ENCODE measurements at regions of chr16 and their contacts with region 1.

Region 1: DNA sequence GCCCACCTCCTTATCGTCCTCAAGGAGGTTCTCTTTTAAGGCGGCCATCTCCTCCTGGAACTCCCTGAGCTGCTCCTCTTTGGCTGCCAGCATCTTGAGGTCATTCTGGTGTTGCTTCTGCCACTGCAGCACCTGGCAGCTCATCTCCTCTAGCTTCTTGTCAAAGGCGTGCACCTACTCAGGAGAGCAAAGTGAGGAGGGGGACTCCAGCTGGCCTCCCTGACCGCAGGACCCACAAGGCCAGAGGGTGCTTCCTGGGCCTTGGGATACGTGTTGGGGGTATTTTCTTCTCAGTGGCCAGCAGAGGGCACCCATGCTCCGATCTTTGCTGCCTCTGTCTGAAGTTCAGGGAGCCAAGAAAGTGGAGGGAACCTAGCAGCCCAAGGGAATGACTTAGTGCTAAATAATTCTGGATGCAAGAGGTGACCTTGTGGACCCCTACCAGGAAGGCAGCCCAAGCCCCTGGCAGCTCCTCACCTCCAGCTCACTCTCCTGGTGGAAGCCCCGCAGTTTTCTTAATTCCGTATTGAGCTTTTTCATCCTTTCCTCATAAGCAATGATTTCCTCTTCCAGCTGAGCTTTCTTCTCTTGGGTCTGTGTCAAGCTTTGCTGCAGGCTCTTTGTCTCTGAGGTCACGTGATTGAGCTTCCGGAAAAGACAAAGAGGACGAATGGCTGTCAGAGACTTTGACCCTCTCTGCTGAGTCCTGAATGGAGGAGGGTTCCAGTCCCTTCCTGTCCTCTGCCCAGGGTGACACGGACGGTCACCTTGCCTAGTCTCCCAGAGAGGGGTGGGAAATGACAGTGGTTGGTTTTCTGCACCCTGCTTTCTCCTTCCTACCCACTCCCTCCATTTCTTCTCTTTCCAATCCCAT is 31.4 kb downstream of the DHX38 start:
- DNase-seq: peak; percentile 77
- ATAC-seq: peak; percentile 56
- H3K4me3 ChIP-seq: no peak overlapping the region
- H3K4me3 Mint-ChIP-seq: no peak overlapping the region
- H3K27ac ChIP-seq: no peak overlapping the region
- H3K27ac Mint-ChIP-seq: peak overlapping the region; percentile 41
- H3K4me1 ChIP-seq: peaks cover 0 to 6% of the 10 kb centered on the region in 2 donors
- H3K4me1 Mint-ChIP-seq: no peaks in the 10 kb centered on the region
- H3K27me3 ChIP-seq: no peaks in the 10 kb centered on the region
- H3K27me3 Mint-ChIP-seq: no peaks in the 10 kb centered on the region
- CTCF ChIP-seq: peak; percentile 87

Region 2: DNA sequence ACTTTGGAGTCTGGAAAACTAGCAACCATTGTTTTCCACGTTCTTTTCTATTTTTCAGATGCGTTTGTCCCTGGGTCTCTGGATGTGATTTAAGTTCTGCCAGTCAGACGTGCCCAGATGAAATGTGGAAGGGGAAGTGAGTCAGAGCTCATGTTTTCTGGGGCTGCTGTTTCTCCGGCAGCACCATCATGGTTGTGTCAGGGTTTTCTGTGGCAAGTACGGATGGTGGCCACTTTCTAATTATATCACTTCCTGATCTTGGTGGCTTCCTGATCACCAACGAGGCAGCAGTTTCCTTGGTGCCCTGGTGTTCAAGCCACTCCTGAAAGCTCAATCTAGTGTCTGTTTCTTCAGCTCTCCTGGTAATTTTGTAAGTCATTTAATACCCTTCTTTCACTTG is 78.4 kb after region 1 on chr16:
- CTCF ChIA-PET with region 1: interaction called, 3 read pairs
- POLR2A ChIA-PET with region 1: no interaction called
- intact Hi-C with region 1: loop called (anchors 5 kb)
- DNase-seq: peak; percentile 42
- ATAC-seq: peak; percentile 54
- H3K4me3 ChIP-seq: peak overlapping the region in 2 of 5 experiments; percentile 3
- H3K4me3 Mint-ChIP-seq: peak overlapping the region; percentile 30
- H3K27ac ChIP-seq: peak overlapping the region; percentile 34 to 63
- H3K27ac Mint-ChIP-seq: peak overlapping the region; percentile 2
- H3K4me1 ChIP-seq: peaks cover 20 to 23% of the 10 kb centered on the region in 2 donors
- H3K4me1 Mint-ChIP-seq: peaks cover 19% of the 10 kb centered on the region
- H3K27me3 ChIP-seq: no peaks in the 10 kb centered on the region
- H3K27me3 Mint-ChIP-seq: no peaks in the 10 kb centered on the region
- CTCF ChIP-seq: no peak

Region 3: GRCh38 chr16:72299684-72300243 is 174.8 kb after region 1 on chr16:
- CTCF ChIA-PET with region 1: no interaction called
- POLR2A ChIA-PET with region 1: no interaction called
- intact Hi-C with region 1: no loop called
- DNase-seq: no peak
- ATAC-seq: no peak
- H3K4me3 ChIP-seq: no peak overlapping the region
- H3K4me3 Mint-ChIP-seq: no peak overlapping the region
- H3K27ac ChIP-seq: no peak overlapping the region
- H3K27ac Mint-ChIP-seq: no peak overlapping the region
- H3K4me1 ChIP-seq: no peaks in the 10 kb centered on the region
- H3K4me1 Mint-ChIP-seq: no peaks in the 10 kb centered on the region
- H3K27me3 ChIP-seq: no peaks in the 10 kb centered on the region
- H3K27me3 Mint-ChIP-seq: no peaks in the 10 kb centered on the region
- CTCF ChIP-seq: no peak

Region 4: DNA sequence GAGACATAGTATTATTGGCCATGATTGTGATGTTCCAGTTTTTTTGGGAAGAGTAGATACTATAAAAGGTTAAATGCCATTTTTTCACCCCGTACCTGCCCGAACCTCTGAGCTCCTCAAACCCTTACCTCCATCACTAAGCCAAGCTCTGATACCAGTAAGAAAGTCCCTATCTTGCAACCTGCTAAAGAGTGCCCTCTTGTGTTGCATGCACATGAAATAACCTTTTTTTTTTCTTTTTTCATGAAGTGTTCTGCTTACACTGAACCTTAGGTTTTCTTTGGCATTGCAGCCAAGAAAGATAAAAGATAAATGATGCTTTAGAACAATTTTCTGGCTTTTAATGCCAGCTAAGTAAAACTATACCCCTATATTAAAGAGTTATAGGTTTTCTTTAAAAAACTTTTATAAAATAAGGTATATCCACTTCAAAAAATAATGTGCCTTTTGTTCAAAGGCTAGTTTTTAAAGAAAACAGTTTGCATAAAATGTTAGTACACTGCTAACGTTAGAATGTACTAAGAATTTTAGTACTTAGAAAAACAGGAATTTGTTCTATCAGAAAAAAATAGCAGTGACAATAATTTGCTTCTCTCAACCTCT is 342.3 kb after region 1 on chr16:
- CTCF ChIA-PET with region 1: interaction called, 47 read pairs
- POLR2A ChIA-PET with region 1: no interaction called
- intact Hi-C with region 1: no loop called
- DNase-seq: peak; percentile 22
- ATAC-seq: no peak
- H3K4me3 ChIP-seq: no peak overlapping the region
- H3K4me3 Mint-ChIP-seq: no peak overlapping the region
- H3K27ac ChIP-seq: no peak overlapping the region
- H3K27ac Mint-ChIP-seq: no peak overlapping the region
- H3K4me1 ChIP-seq: peaks cover 3 to 5% of the 10 kb centered on the region in 2 donors
- H3K4me1 Mint-ChIP-seq: peaks cover 21% of the 10 kb centered on the region
- H3K27me3 ChIP-seq: no peaks in the 10 kb centered on the region
- H3K27me3 Mint-ChIP-seq: no peaks in the 10 kb centered on the region
- CTCF ChIP-seq: peak; percentile 25

Region 5: GRCh38 chr16:73196670-73197069 is 1071.7 kb after region 1 on chr16:
- CTCF ChIA-PET with region 1: interaction called, 3 read pairs
- POLR2A ChIA-PET with region 1: no interaction called
- intact Hi-C with region 1: loop called (anchors 2 kb)
- DNase-seq: peak; percentile 45
- ATAC-seq: no peak
- H3K4me3 ChIP-seq: no peak overlapping the region
- H3K4me3 Mint-ChIP-seq: no peak overlapping the region
- H3K27ac ChIP-seq: no peak overlapping the region
- H3K27ac Mint-ChIP-seq: no peak overlapping the region
- H3K4me1 ChIP-seq: no peaks in the 10 kb centered on the region
- H3K4me1 Mint-ChIP-seq: no peaks in the 10 kb centered on the region
- H3K27me3 ChIP-seq: peaks cover 0 to 2% (median 0%) of the 10 kb centered on the region in 4 experiments
- H3K27me3 Mint-ChIP-seq: peaks cover under 1% of the 10 kb centered on the region
- CTCF ChIP-seq: peak; percentile 59

Region 6: DNA sequence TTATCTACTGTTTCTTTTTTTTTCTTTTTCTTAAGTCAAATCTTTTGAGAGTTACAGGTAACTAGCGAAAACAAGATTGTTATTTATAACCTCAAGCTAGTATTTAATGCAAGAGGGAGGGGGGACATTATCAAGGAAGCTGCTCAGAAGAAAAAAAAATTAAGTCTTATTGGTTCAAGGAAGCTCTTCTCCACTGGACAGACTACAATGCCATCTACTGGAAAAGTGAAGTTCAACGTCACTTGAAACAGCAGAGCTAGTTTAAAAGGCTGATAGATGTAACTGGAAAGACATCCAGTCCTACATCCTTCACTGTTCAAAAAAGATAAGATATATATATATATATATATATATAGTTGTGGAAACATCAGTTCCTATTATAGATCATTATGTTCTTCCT is 1753.6 kb after region 1 on chr16:
- CTCF ChIA-PET with region 1: interaction called, 18 read pairs
- POLR2A ChIA-PET with region 1: no interaction called
- intact Hi-C with region 1: no loop called
- DNase-seq: peak; percentile 18
- ATAC-seq: no peak
- H3K4me3 ChIP-seq: no peak overlapping the region
- H3K4me3 Mint-ChIP-seq: no peak overlapping the region
- H3K27ac ChIP-seq: no peak overlapping the region
- H3K27ac Mint-ChIP-seq: no peak overlapping the region
- H3K4me1 ChIP-seq: no peaks in the 10 kb centered on the region
- H3K4me1 Mint-ChIP-seq: no peaks in the 10 kb centered on the region
- H3K27me3 ChIP-seq: no peaks in the 10 kb centered on the region
- H3K27me3 Mint-ChIP-seq: peaks cover 3% of the 10 kb centered on the region
- CTCF ChIP-seq: peak; percentile 37

Measured in B cell (primary cell).